HEK293 (cell line): ENCODE measurements at regions of chr18 and their contacts with region 1.

Region 1: DNA sequence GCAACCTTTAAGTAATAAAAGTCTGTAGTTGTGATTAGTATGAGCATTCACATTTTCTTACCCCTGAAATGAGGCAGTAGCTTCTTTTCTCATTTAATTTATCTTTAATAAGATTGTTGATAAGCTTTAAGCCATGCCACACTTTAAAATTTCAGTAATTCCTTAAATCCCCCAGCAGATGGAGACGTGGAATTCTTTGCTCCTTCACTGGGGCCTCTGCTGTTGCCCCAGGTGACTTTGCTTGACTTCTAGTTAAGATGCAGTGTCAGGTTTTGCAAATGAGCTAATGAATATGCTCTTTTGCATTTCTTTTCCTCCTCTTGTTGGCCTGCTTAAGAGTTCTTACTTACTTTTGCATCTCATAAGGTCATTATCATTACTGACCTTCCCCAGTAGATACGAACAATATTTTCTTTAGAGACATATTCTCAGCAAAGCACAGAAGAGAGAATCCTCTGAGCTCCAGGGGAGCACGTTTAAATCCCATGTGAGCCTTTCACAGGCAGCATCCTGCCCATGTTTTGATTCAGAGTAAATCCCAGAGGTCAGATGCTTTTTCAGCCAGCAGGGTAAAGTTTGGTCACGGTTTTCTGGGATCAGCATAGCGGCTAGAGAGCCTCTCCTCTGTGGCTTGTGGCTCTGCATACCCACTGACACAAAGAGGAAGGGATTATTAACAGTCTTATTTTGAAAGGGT is 222.9 kb downstream of the PTPRM start:
- H3K4me3 ChIP-seq: no peak overlapping the region
- H3K27ac ChIP-seq: no peak overlapping the region
- H3K4me1 ChIP-seq: peaks cover 7% of the 10 kb centered on the region
- CTCF ChIP-seq: peak; percentile 11; the same call in 1 of the 2 replicates

Region 2: GRCh38 chr18:7772510-7772888 is 17.5 kb before region 1 on chr18:
- CTCF ChIA-PET with region 1: interaction called, 10 read pairs
- POLR2A ChIA-PET with region 1: no interaction called
- H3K4me3 ChIP-seq: no peak overlapping the region
- H3K27ac ChIP-seq: no peak overlapping the region
- H3K4me1 ChIP-seq: no peaks in the 10 kb centered on the region
- CTCF ChIP-seq: no peak

Region 3: GRCh38 chr18:7778181-7778580 is 11.8 kb before region 1 on chr18:
- CTCF ChIA-PET with region 1: interaction called, 13 read pairs
- POLR2A ChIA-PET with region 1: no interaction called
- H3K4me3 ChIP-seq: no peak overlapping the region
- H3K27ac ChIP-seq: no peak overlapping the region
- H3K4me1 ChIP-seq: peaks cover 3% of the 10 kb centered on the region; the same call in 1 of the 2 replicates
- CTCF ChIP-seq: no peak

Region 4: GRCh38 chr18:7830468-7830867 is 40.5 kb after region 1 on chr18:
- CTCF ChIA-PET with region 1: no interaction called
- POLR2A ChIA-PET with region 1: no interaction called
- H3K4me3 ChIP-seq: no peak overlapping the region
- H3K27ac ChIP-seq: no peak overlapping the region
- H3K4me1 ChIP-seq: no peaks in the 10 kb centered on the region
- CTCF ChIP-seq: no peak